IMR-90 (cell line): ENCODE measurements at regions of chr10 and their contacts with region 1.

Region 1: GRCh38 chr10:91409869-91410637 is at the start of gene HECTD2:
- DNase-seq: peak; percentile 65
- ATAC-seq: peak; percentile 80
- H3K4me3 ChIP-seq: peak within 1 kb of the TSS; percentile 83
- H3K27ac ChIP-seq: peak within 1 kb of the TSS; percentile 98
- H3K4me1 ChIP-seq: no peaks in the 10 kb centered on the region
- H3K27me3 ChIP-seq: no peaks in the 10 kb centered on the region
- CTCF ChIP-seq: peak; percentile 57
- POLR2A ChIP-seq: peak; percentile 64; the same call in 1 of the 2 replicates
- RAD21 ChIP-seq: peak; percentile 27
- total RNA-seq, gene HECTD2: 5.9 and 10.3 TPM in 2 replicates

Region 2: GRCh38 chr10:91536111-91536510 is 126.1 kb after region 1 on chr10:
- CTCF ChIA-PET with region 1: no interaction called
- POLR2A ChIA-PET with region 1: no interaction called
- dilution Hi-C with region 1: no loop called
- in situ Hi-C with region 1: no loop called
- intact Hi-C with region 1: loop called (anchors 1 kb)
- DNase-seq: peak; percentile 72
- ATAC-seq: peak; percentile 96
- H3K4me3 ChIP-seq: no peak overlapping the region
- H3K27ac ChIP-seq: peak overlapping the region; percentile 42; the same call in 1 of the 2 replicates
- H3K4me1 ChIP-seq: peaks cover 4% of the 10 kb centered on the region; the same call in 1 of the 2 replicates
- H3K27me3 ChIP-seq: no peaks in the 10 kb centered on the region
- CTCF ChIP-seq: no peak
- POLR2A ChIP-seq: no peak
- RAD21 ChIP-seq: no peak